Right lobe of liver (tissue), 6 donors: ENCODE measurements at regions of chr5 and their contacts with region 1.

Region 1: GRCh38 chr5:57302164-57302563 is 128.3 kb downstream of the GPBP1 start:
- DNase-seq: peak in 2 of 3 donors; percentile 37 to 63
- ATAC-seq: peak; percentile 48 to 73 (median 60)
- H3K4me3 ChIP-seq: no peak overlapping the region
- H3K27ac ChIP-seq: no peak overlapping the region
- H3K4me1 ChIP-seq: peaks cover 0 to 6% (median 0%) of the 10 kb centered on the region in 4 donors
- H3K27me3 ChIP-seq: no peaks in the 10 kb centered on the region
- CTCF ChIP-seq: peak in 3 of 4 donors; percentile 21 to 31 (median 30)
- POLR2A ChIP-seq: no peak

Region 2: GRCh38 chr5:57435701-57436134 is 133.6 kb after region 1 on chr5:
- intact Hi-C with region 1: loop called in 1 of 2 experiments (anchors 10 kb)
- DNase-seq: no peak
- ATAC-seq: peak in 2 of 4 donors; percentile 45 to 73
- H3K4me3 ChIP-seq: no peak overlapping the region
- H3K27ac ChIP-seq: no peak overlapping the region
- H3K4me1 ChIP-seq: no peaks in the 10 kb centered on the region
- H3K27me3 ChIP-seq: no peaks in the 10 kb centered on the region
- CTCF ChIP-seq: no peak
- POLR2A ChIP-seq: no peak